ENCODE measurements at regions of chr2 and their contacts with region 1.

Region 1: GRCh38 chr2:241315093-241315878 is at the start of gene HDLBP:
- DNase-seq: peak; percentile 95 to 100
- H3K4me3 ChIP-seq: peak within 1 kb of the TSS; percentile 95
- H3K27ac ChIP-seq: peak within 1 kb of the TSS; percentile 96
- H3K4me1 ChIP-seq: peaks cover 39% of the 10 kb centered on the region
- H3K27me3 ChIP-seq: no peaks in the 10 kb centered on the region
- CTCF ChIP-seq: no peak
- total RNA-seq, gene HDLBP: 715 and 908 TPM in 2 replicates

Region 2: GRCh38 chr2:241102239-241102803 is 213.0 kb before region 1 on chr2 and contains the start of gene MTERF4:
- CTCF ChIA-PET with region 1: interaction called, 3 read pairs
- POLR2A ChIA-PET with region 1: no interaction called
- intact Hi-C with region 1: loop called (anchors 5 kb)
- DNase-seq: peak; percentile 84 to 96
- H3K4me3 ChIP-seq: peak within 1 kb of the TSS; percentile 83
- H3K27ac ChIP-seq: peak within 1 kb of the TSS; percentile 66
- H3K4me1 ChIP-seq: peaks cover 10% of the 10 kb centered on the region
- H3K27me3 ChIP-seq: no peaks in the 10 kb centered on the region
- CTCF ChIP-seq: no peak
- total RNA-seq, gene MTERF4: 38.6 and 42.8 TPM in 2 replicates

Region 3: GRCh38 chr2:241271641-241272297 is 43.5 kb before region 1 on chr2:
- CTCF ChIA-PET with region 1: no interaction called
- POLR2A ChIA-PET with region 1: interaction called, 7 read pairs
- intact Hi-C with region 1: loop called (anchors 2 kb)
- DNase-seq: peak; percentile 76 to 84
- H3K4me3 ChIP-seq: peak overlapping the region; percentile 65
- H3K27ac ChIP-seq: peak overlapping the region; percentile 42; the same call in 1 of the 2 replicates
- H3K4me1 ChIP-seq: peaks cover 31% of the 10 kb centered on the region
- H3K27me3 ChIP-seq: no peaks in the 10 kb centered on the region
- CTCF ChIP-seq: no peak

Region 4: DNA sequence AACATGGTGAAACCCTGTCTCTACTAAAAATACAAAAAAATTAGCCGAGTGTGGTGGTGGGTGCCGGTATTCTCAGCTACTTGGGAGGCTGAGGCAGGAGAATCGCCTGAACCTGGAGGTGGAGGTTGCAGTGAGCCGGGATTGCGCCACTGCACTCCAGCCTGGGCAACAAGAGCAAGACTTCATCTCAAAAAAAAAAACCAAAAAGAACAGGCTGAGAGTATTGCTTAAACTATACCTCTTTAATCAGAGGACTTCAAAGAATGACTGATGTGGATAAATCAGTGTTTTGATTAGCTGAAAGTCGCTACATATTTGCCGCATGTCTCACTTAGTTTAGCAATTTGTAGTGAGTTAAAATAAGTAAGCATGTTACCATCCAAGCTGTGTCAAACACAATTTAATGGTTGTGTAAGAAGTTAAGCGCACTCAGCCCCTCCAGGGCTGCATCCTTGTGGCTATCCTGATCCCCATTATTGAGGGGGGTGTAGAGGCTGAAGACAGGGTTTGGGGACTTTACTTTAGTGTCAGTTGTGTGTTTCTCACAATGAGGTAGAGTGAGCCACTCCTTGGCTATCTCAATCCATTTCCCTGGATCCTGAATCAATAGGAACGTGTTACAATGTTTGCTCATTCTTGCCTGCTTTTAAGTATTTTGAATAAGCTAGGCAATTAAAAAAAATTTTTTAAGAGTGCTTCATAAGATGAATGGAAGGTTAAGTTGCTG is 29.8 kb after region 1 on chr2:
- CTCF ChIA-PET with region 1: no interaction called
- POLR2A ChIA-PET with region 1: no interaction called
- intact Hi-C with region 1: no loop called
- DNase-seq: no peak
- H3K4me3 ChIP-seq: no peak overlapping the region
- H3K27ac ChIP-seq: no peak overlapping the region
- H3K4me1 ChIP-seq: no peaks in the 10 kb centered on the region
- H3K27me3 ChIP-seq: no peaks in the 10 kb centered on the region
- CTCF ChIP-seq: no peak

Region 5: GRCh38 chr2:241620419-241620769 is 305.1 kb after region 1 on chr2:
- CTCF ChIA-PET with region 1: no interaction called
- POLR2A ChIA-PET with region 1: interaction called, 22 read pairs
- intact Hi-C with region 1: no loop called
- DNase-seq: peak in 1 of 2 experiments; percentile 43
- H3K4me3 ChIP-seq: no peak overlapping the region
- H3K27ac ChIP-seq: peak overlapping the region; percentile 37; the same call in 1 of the 2 replicates
- H3K4me1 ChIP-seq: no peaks in the 10 kb centered on the region
- H3K27me3 ChIP-seq: no peaks in the 10 kb centered on the region
- CTCF ChIP-seq: no peak